ENCODE measurements at regions of chr4 and their contacts with region 1.

Region 1: GRCh38 chr4:173494013-173494970 is 35.7 kb downstream of the HAND2 start:
- DNase-seq: peak; percentile 62
- ATAC-seq: peak; percentile 95

Region 2: DNA sequence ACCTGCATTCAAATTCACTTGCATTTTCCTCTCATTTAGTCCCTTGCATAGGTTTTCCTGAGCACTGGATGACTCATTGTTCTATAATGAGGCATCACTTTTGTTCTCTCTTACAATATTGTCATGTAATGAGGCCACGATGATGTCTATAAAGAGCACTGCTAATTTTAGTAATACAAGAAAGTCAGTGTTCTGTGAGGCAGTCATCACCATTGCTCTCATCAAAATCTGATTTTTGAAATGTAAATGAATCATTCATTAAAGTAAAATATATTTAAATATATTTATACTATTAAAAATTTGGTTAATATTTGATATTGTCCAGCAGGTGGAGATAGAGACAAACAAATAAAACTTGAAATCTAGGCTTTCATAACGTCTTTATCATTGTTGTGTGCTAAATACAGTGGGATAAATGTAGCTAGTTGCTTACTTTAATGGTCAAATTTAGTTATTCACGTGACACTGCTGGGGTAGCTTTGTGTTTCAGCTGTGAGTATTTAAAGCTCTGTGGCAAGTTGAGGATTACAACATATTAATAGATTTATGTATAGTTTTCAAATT is 175.6 kb before region 1 on chr4:
- intact Hi-C with region 1: loop called (anchors 10 kb)
- DNase-seq: no peak
- ATAC-seq: peak; percentile 69

Region 3: DNA sequence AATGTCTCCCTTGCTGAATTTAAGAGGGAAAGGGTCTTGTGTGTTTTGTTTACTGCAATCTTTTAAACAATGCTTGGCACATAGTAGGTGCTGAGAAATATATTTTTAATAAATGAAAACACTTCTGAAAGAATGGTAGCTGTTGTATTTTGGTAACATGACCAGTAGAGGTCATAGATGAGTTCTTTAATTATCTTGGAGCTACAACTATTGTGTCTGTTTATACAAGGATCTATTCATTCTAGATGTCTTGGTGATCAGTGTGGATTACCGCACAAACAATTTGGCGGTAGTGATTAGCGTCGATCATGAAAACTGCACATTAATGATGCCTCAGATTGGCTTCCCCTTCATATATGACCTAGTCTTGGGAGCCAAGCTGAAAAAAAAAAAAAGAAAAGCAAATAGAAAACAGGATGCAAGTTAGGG is 74.0 kb before region 1 on chr4:
- intact Hi-C with region 1: loop called (anchors 2 kb)
- DNase-seq: no peak
- ATAC-seq: peak; percentile 54

Region 4: GRCh38 chr4:173448603-173449379 is 45.5 kb before region 1 on chr4:
- intact Hi-C with region 1: loop called (anchors 5 kb)
- DNase-seq: no peak
- ATAC-seq: peak; percentile 88

Region 5: DNA sequence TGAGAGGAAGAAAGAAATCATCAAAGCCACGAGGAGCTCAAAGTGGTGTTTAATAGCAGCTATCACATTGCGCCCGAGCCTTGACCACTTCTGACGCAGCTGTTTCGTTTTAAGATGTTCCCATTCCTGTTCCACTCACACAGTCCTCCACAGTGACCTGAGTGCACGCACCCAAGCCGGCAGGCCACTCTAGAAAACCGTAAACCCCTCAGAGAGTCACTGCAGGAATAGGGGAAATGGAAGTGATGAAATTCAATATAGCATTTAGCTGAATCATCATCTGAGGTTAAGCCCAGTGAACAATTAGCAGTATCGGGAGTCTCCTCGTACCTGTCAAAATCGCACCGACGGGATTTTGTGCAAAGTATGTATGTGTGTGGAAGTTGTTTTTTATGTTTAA is 53.6 kb after region 1 on chr4:
- intact Hi-C with region 1: no loop called
- DNase-seq: no peak
- ATAC-seq: peak; percentile 66

Measured in Right ventricle myocardium superior (tissue), 1 donor.